Endothelial cell of umbilical vein (primary cell): ENCODE measurements at regions of chr10 and their contacts with region 1.

Region 1: GRCh38 chr10:122854648-122855047 is 9.0 kb upstream of the CUZD1 start:
- DNase-seq: peak; percentile 54
- H3K4me3 ChIP-seq: no peak overlapping the region
- H3K27ac ChIP-seq: peak overlapping the region; percentile 73
- H3K4me1 ChIP-seq: peaks cover 61% of the 10 kb centered on the region
- H3K27me3 ChIP-seq: no peaks in the 10 kb centered on the region
- CTCF ChIP-seq: no peak
- POLR2A ChIP-seq: no peak

Region 2: GRCh38 chr10:122495406-122496340 is 359.0 kb before region 1 on chr10:
- CTCF ChIA-PET with region 1: no interaction called
- POLR2A ChIA-PET with region 1: no interaction called
- dilution Hi-C with region 1: no loop called
- intact Hi-C with region 1: loop called (anchors 10 kb)
- DNase-seq: peak; percentile 72
- H3K4me3 ChIP-seq: peak overlapping the region in 1 of 3 experiments; percentile 32
- H3K27ac ChIP-seq: peak overlapping the region; percentile 91
- H3K4me1 ChIP-seq: peaks cover 32% of the 10 kb centered on the region
- H3K27me3 ChIP-seq: no peaks in the 10 kb centered on the region
- CTCF ChIP-seq: no peak
- POLR2A ChIP-seq: no peak

Region 3: GRCh38 chr10:122879339-122880273 is 25.0 kb after region 1 on chr10 and contains the start of gene FAM24B:
- CTCF ChIA-PET with region 1: interaction called, 3 read pairs
- POLR2A ChIA-PET with region 1: no interaction called
- dilution Hi-C with region 1: no loop called
- intact Hi-C with region 1: loop called (anchors 1 kb)
- DNase-seq: peak; percentile 99
- H3K4me3 ChIP-seq: peak within 1 kb of the TSS; percentile 39 to 56 (median 55)
- H3K27ac ChIP-seq: peak within 1 kb of the TSS; percentile 43
- H3K4me1 ChIP-seq: peaks cover 26% of the 10 kb centered on the region
- H3K27me3 ChIP-seq: no peaks in the 10 kb centered on the region
- CTCF ChIP-seq: no peak
- POLR2A ChIP-seq: peak; percentile 42
- total RNA-seq, gene FAM24B: 8.5 and 10.6 TPM in 2 replicates

Region 4: DNA sequence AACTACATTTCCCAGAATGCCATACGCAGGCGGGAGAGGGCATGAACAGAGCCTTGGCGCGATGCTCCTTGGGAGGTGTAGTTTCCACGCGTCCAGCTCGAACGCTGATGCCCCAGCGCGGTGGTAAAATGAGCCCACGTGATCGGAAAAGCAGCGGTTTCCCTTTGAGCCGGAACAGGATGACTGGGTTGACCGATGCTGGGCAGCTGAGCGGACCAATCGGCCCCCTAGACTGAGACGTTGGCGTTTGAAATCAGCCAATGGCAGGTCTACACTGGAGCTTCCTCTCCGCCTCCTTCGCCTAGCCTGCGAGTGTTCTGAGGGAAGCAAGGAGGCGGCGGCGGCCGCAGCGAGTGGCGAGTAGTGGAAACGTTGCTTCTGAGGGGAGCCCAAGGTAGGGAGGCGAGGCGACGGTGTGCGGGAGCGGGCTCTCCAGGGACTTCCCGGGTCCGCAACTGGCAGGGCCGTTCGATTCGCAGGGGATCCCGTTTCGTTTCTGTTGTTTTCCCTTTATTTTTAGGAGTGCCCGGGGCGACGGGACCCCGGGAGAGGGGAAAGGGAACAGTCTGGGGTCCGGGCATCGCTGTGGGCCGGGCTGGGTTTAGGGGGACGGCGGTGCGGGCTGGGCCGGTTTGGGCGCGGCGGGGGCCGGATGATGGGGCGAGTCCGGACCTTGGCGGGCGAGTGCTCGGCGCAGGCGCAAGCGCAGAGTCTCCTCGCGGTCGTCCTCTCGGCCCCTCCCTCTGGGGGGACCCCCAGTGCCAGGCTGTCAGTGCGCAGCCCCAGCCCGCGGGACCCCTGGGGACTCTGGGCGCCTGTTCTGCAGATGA is 299.7 kb after region 1 on chr10 and contains the start of gene BUB3:
- CTCF ChIA-PET with region 1: no interaction called
- POLR2A ChIA-PET with region 1: no interaction called
- dilution Hi-C with region 1: no loop called
- intact Hi-C with region 1: loop called (anchors 5 kb)
- DNase-seq: peak; percentile 100
- H3K4me3 ChIP-seq: peak within 1 kb of the TSS; percentile 61 to 92 (median 90)
- H3K27ac ChIP-seq: peak within 1 kb of the TSS; percentile 81
- H3K4me1 ChIP-seq: peaks cover 48% of the 10 kb centered on the region
- H3K27me3 ChIP-seq: peaks cover 35 to 41% of the 10 kb centered on the region in 2 experiments
- CTCF ChIP-seq: no peak
- POLR2A ChIP-seq: peak; percentile 91
- total RNA-seq, gene BUB3: 178 and 193 TPM in 2 replicates